Activated CD8-positive, alpha-beta memory T cell treated with anti-CD3 and anti-CD28 coated beads, Interleukin-2, amount 10 ng/mL, durations not matched to agents 7 days and 5 days (primary cell): ENCODE measurements at regions of chr6 and their contacts with region 1.

Region 1: DNA sequence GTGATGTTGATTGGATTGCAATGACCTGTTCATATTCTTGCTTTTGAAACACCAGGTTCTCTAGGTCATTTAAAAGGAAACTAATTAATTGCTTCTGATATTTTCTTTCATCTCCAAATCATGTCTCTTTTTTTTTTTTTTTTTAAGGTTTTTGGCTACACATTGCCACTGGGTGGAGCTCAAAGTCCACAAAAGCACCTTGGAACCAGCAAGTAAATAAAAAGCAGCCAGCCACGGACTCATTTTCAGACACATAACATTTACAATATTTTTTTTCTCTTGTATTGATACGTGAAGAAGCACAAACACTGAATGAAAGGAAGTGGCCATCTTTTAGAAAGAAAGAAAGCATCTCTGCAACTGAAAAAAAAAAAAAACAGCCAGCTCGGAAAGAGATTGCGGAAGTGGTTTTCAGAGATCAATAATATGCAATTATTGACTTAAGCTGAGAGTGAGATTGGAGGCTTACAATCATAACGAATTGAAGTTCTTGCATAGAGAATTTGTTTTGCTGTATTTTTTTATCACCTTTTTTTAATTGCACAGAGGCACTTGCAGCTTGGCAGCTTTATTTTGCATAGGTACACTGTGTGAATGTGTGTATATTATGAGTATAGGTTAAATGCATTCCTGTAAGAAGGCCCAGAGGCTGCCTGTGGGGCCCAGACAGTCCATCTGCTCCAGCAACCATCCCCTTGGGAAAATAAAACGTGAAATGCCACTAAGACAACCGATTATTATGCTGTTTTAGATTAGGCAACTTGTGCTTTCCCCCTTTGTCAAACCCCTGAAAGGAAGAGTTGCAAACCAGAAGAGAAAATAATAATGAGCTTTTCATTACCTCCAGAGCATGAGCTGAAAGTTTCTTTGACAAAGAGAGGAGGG is 28.2 kb downstream of the CGA start:
- DNase-seq: peak; percentile 60
- ATAC-seq: peak; percentile 47
- H3K4me3 Mint-ChIP-seq: peak overlapping the region; percentile 25
- H3K27ac Mint-ChIP-seq: no peak overlapping the region
- H3K4me1 Mint-ChIP-seq: peaks cover 2% of the 10 kb centered on the region
- H3K27me3 Mint-ChIP-seq: peaks cover 43% of the 10 kb centered on the region

Region 2: DNA sequence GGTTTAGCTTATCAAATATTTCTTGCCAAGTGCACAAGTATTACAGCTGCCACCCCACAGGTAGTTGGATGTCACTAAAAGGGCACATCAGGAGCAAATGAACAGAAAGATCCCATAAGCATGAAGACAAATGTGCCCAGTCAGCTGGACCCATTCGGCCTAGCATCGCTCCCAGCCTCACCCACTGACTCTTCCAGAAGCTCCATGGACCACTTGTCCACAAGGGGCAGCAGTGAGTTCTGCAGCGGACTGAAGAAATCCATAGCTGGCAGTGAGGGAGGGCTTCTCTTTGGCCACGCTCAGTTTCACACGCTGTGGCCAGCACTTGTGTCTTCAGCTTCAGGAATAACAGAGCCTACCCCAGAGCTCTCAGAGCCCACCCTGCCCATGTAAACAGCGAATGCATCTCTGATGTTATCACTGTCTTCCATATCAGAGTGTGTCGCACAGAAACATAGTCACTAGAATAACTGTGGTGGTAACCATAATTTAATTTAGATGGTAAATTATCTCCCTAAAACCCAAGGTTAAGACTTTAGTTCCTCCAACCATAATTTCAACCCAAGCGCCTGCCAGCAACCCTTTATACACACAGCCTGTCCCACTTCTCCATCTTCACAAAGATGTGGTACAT is 12.4 kb after region 1 on chr6:
- CTCF ChIA-PET with region 1: interaction called, 23 read pairs
- DNase-seq: peak; percentile 68
- ATAC-seq: peak; percentile 67
- H3K4me3 Mint-ChIP-seq: no peak overlapping the region
- H3K27ac Mint-ChIP-seq: no peak overlapping the region
- H3K4me1 Mint-ChIP-seq: peaks cover 4% of the 10 kb centered on the region
- H3K27me3 Mint-ChIP-seq: peaks cover 19% of the 10 kb centered on the region

Region 3: DNA sequence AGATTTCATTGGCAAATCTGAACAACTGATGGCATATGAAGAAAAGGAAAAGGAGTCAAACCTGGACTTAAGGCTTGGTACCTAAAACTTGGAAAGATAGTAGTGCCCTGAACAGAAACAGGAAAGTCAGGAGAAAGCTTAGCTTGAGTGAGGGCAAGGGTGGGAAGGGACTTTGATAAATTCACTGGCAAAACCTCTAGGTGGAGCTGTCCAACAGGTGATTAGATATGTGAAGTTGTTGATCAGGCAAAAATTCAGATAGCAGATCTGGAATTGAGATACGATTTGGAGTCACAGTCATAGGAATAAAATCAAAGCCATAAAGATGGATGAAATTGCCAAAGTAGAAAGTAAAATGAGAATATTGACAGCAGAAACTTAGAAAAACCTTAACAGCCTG is 72.5 kb after region 1 on chr6:
- CTCF ChIA-PET with region 1: interaction called, 11 read pairs
- DNase-seq: no peak
- ATAC-seq: peak; percentile 64
- H3K4me3 Mint-ChIP-seq: no peak overlapping the region
- H3K27ac Mint-ChIP-seq: no peak overlapping the region
- H3K4me1 Mint-ChIP-seq: peaks cover 2% of the 10 kb centered on the region
- H3K27me3 Mint-ChIP-seq: peaks cover 47% of the 10 kb centered on the region